Gastrocnemius medialis (tissue), 4 donors: ENCODE measurements at regions of chr6 and their contacts with region 1.

Region 1: DNA sequence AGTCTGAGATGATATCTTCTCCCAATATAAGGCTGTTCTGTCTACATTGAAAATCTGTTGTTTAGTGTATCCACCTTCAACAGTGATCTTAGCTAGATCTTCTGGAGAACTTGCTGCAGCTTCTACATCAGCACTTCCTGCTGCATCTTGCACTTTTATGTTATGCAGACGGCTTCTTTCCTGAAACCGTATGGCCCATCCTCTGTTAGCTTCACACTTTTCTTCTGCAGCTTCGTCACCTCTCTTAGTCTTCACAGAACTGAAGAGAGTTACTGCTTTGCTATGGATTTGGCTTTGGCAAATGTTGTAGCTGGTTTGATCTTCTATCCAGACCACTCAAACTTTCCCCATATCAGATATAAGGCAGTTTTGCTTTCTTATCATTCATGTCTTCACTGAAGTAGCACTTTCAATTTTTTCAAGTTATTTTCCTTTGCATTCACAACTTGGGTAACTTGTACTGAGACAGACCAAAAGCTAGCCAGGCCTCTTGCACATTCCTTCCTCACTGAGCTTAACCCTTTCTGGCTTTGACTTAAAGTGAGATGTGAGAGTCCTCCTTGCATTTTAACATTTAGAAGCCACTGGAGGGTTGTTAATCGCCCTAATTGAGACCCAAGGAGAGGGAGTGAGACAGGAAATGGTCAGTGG is 110.1 kb downstream of the PREP start:
- DNase-seq: no peak
- ATAC-seq: no peak
- H3K4me3 ChIP-seq: no peak overlapping the region
- H3K27ac ChIP-seq: no peak overlapping the region
- H3K4me1 ChIP-seq: peaks cover 6 to 17% of the 10 kb centered on the region in 2 donors
- H3K27me3 ChIP-seq: no peaks in the 10 kb centered on the region
- CTCF ChIP-seq: no peak
- POLR2A ChIP-seq: no peak

Region 2: GRCh38 chr6:105097288-105097687 is 195.5 kb before region 1 on chr6:
- in situ Hi-C with region 1: loop called in 1 of 4 experiments (anchors 10 kb)
- intact Hi-C with region 1: no loop called
- DNase-seq: no peak
- ATAC-seq: no peak
- H3K4me3 ChIP-seq: no peak overlapping the region
- H3K27ac ChIP-seq: peak overlapping the region in 1 of 4 donors; percentile 44
- H3K4me1 ChIP-seq: peaks cover 9 to 13% of the 10 kb centered on the region in 2 donors
- H3K27me3 ChIP-seq: no peaks in the 10 kb centered on the region
- CTCF ChIP-seq: no peak
- POLR2A ChIP-seq: no peak